Aorta (tissue), 5 donors: ENCODE measurements at regions of chr4 and their contacts with region 1.

Region 1: DNA sequence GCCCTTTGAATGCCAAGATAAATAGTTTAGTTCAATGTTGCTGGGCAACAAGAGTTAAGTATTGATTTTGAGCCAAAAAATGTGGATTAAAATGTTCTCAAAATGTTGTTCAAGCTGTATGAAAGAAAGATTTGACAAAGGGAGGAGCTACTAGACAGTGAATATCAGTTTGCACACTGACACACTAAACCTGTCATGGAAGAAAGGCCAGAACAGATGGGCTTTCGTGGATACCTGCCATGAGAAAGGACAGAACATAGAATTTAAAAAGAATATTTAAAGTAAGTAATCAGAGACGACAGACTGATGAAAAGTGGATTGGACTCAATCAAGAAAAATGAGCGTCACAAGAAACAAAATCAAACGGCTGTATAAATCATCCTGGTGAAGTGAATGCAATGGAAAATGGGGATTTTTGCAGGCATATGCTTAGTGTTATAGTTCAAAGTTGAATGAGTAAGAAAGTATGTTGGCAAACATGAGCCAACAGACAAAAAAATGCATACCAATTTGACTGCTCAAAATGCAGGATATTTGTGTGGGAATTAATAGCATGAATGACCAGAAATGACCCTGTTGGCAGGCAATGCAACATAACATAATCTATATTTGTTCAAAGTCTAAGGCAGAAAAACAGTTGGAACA is 7.4 kb downstream of the PCDH18 start:
- DNase-seq: no peak
- ATAC-seq: no peak
- H3K4me3 ChIP-seq: peak overlapping the region in 1 of 2 donors; percentile 18
- H3K27ac ChIP-seq: no peak overlapping the region
- H3K4me1 ChIP-seq: peaks cover 8 to 10% of the 10 kb centered on the region in 2 donors
- H3K27me3 ChIP-seq: no peaks in the 10 kb centered on the region

Region 2: DNA sequence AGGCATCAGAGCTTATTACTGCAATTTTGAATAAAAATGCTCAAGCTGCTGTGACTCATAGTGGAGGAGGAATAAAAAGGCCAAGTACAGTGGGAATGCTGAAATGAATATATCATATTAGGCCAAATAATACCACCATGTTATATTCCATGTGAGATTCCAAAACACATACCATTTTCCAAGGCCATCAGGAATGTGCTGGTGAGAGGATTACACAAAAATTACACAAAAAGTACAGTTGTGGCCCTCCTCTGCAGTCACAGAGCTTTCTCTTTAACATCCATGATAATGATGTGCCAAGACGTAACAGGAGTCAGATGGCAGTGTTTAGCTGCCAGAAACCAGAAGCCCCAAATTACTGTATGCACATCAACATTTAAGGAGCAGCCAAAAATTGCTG is 146.0 kb before region 1 on chr4:
- intact Hi-C with region 1: loop called (anchors 5 kb)
- DNase-seq: no peak
- ATAC-seq: no peak
- H3K4me3 ChIP-seq: no peak overlapping the region
- H3K27ac ChIP-seq: no peak overlapping the region
- H3K4me1 ChIP-seq: peaks cover 3 to 4% of the 10 kb centered on the region in 2 donors
- H3K27me3 ChIP-seq: no peaks in the 10 kb centered on the region

Region 3: GRCh38 chr4:137432446-137433311 is 92.2 kb before region 1 on chr4:
- intact Hi-C with region 1: loop called (anchors 5 kb)
- DNase-seq: no peak
- ATAC-seq: no peak
- H3K4me3 ChIP-seq: peak overlapping the region; percentile 9 to 54
- H3K27ac ChIP-seq: peak overlapping the region in 1 of 2 donors; percentile 77
- H3K4me1 ChIP-seq: peaks cover 0 to 3% of the 10 kb centered on the region in 2 donors
- H3K27me3 ChIP-seq: no peaks in the 10 kb centered on the region